MCF 10A (cell line): ENCODE measurements at regions of chr3 and their contacts with region 1.

Region 1: DNA sequence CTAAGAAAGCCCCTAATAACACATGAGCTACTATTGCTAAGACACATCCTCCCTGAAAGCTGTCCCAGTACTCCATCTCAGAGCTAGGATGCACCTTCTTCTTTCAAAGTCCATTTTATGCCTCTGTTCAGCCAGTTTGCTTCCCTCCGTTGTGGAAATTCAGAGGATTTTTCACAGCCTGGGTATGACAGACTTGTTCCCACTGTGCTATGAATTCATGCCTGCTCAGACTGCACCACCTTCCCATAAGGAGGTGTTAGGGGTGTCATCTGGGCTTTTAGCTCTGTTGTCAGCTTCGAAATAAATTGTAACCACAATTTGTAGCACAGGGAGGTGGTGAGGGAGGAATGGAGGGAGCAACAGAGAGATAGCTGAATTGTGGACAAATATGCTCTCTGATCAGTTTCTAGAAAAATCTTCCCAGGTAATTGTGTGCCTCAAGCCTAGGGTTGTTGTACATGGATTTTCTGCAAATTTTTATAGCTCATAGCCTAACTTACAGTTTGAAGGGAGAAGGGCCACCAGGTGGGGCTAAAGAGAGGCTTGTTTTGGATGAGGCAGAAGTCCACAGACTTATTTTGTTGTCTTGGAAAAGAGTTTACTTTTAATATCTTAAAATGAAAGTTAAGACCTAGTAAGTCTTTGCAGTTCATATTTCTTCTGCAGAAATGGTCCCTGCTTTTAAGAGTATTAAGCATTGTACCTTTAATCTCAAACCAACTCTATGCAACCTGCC is 462.0 kb downstream of the PDCD6IP start:
- DNase-seq: peak; percentile 61
- H3K4me3 Mint-ChIP-seq: no peak overlapping the region
- H3K27ac Mint-ChIP-seq: no peak overlapping the region
- H3K4me1 Mint-ChIP-seq: peaks cover 6% of the 10 kb centered on the region
- H3K27me3 Mint-ChIP-seq: peaks cover 29% of the 10 kb centered on the region
- CTCF ChIP-seq: peak; percentile 45

Region 2: DNA sequence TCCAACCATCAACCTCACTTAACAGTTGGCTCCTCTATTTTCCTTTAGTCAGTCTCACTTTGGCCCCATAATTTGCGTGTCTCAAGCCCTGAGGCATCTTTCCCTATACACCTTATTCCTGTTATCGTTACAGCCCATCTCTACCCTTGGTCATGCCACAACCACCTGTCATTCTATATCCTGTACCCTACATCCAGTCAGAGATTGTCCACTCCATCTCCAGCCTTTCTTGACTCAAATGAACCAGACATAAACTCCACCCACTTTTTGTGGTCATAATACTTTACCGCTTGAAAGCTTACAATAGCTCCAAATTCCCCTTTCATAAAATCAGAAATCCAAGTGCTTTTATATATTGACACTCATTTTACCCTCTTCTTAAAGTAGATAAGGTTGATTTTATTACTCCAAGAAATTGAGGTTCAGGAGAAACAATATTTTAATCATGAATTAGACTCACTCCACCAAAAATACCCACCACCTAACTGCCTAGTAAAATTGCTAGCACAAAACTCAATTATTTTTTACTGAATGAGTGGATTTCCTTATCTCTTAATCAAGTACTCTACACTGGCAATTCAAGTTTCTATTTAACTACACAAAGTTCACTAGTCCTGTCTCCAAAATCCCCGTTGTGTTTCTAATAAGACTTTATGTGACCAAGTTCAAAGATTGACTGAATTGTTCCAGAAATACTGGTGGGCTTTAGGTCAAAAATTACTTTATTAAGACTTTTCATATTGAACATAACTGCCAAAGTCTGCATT is 1299.9 kb before region 1 on chr3:
- CTCF ChIA-PET with region 1: no interaction called
- POLR2A ChIA-PET with region 1: no interaction called
- intact Hi-C with region 1: no loop called
- DNase-seq: no peak
- H3K4me3 Mint-ChIP-seq: no peak overlapping the region
- H3K27ac Mint-ChIP-seq: no peak overlapping the region
- H3K4me1 Mint-ChIP-seq: peaks cover 11% of the 10 kb centered on the region
- H3K27me3 Mint-ChIP-seq: no peaks in the 10 kb centered on the region
- CTCF ChIP-seq: no peak

Region 3: GRCh38 chr3:33807190-33807589 is 453.2 kb before region 1 on chr3:
- CTCF ChIA-PET with region 1: no interaction called
- POLR2A ChIA-PET with region 1: no interaction called
- intact Hi-C with region 1: no loop called
- DNase-seq: no peak
- H3K4me3 Mint-ChIP-seq: no peak overlapping the region
- H3K27ac Mint-ChIP-seq: no peak overlapping the region
- H3K4me1 Mint-ChIP-seq: peaks cover 59% of the 10 kb centered on the region
- H3K27me3 Mint-ChIP-seq: no peaks in the 10 kb centered on the region
- CTCF ChIP-seq: no peak

Region 4: DNA sequence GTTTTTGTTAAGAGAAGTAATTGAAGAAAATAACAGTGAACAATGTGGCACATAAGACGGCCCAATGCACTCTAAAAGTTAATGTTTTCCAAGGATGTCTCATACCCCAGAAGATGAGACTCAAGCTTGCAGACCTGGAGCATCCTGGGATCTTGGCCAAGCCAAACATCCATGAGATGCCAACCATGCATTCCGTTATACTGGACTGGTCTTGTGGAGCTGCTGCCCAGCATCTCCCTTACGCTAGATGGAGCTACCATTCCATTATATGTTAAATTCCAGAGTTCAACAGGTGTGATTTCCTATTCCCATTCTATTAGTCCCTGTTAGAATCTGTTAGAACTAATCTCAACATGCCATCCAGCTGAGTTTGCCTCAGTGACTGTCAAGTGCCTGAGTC is 280.2 kb before region 1 on chr3:
- CTCF ChIA-PET with region 1: interaction called, 10 read pairs
- POLR2A ChIA-PET with region 1: no interaction called
- intact Hi-C with region 1: loop called (anchors 1 kb)
- DNase-seq: peak; percentile 82
- H3K4me3 Mint-ChIP-seq: no peak overlapping the region
- H3K27ac Mint-ChIP-seq: no peak overlapping the region
- H3K4me1 Mint-ChIP-seq: no peaks in the 10 kb centered on the region
- H3K27me3 Mint-ChIP-seq: peaks cover 40% of the 10 kb centered on the region
- CTCF ChIP-seq: peak; percentile 60

Region 5: DNA sequence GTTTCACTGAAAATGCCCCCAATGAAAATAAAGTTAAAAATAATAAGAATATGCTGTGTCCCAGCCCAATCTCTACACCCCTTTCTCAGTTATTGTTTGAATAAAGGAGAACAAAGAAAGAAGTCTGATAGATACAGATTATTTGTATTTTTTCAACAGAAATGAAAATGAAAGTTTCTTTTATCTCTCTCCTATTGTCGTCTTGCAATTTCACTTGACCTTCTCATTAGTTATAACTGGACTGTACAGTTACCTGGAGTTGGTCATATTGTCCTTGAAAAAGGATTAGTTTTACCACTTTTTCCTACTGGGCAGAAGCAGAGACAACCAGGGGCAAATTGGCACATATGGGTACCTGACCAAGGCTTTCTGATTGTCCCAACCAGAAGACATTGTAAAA is 22.0 kb before region 1 on chr3:
- CTCF ChIA-PET with region 1: interaction called, 10 read pairs
- POLR2A ChIA-PET with region 1: no interaction called
- intact Hi-C with region 1: no loop called
- DNase-seq: no peak
- H3K4me3 Mint-ChIP-seq: no peak overlapping the region
- H3K27ac Mint-ChIP-seq: no peak overlapping the region
- H3K4me1 Mint-ChIP-seq: no peaks in the 10 kb centered on the region
- H3K27me3 Mint-ChIP-seq: peaks cover 40% of the 10 kb centered on the region
- CTCF ChIP-seq: no peak

Region 6: GRCh38 chr3:34292605-34293300 is 32.3 kb after region 1 on chr3:
- CTCF ChIA-PET with region 1: interaction called, 12 read pairs
- POLR2A ChIA-PET with region 1: no interaction called
- intact Hi-C with region 1: no loop called
- DNase-seq: no peak
- H3K4me3 Mint-ChIP-seq: no peak overlapping the region
- H3K27ac Mint-ChIP-seq: no peak overlapping the region
- H3K4me1 Mint-ChIP-seq: no peaks in the 10 kb centered on the region
- H3K27me3 Mint-ChIP-seq: peaks cover 15% of the 10 kb centered on the region
- CTCF ChIP-seq: no peak

Region 7: DNA sequence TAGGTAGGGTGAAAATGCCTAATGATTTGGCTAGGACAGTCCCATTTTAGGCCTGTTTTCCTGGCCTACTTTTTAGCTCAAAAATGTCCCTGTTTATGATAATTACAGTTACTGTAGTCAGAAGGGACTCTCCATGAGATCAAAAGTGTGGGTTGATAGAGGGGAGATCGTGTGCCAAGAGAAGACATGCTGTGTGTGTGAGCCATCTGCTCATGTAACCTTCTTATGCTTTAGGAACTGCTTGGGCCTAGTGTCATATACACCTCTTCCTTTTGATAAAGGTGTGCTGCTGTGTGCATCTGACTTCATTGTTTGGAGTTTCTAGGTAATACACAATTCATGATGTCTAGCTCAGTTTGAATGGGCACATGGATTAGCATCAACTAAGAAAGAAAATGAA is 324.5 kb after region 1 on chr3:
- CTCF ChIA-PET with region 1: no interaction called
- POLR2A ChIA-PET with region 1: no interaction called
- intact Hi-C with region 1: no loop called
- DNase-seq: no peak
- H3K4me3 Mint-ChIP-seq: no peak overlapping the region
- H3K27ac Mint-ChIP-seq: no peak overlapping the region
- H3K4me1 Mint-ChIP-seq: no peaks in the 10 kb centered on the region
- H3K27me3 Mint-ChIP-seq: peaks cover 16% of the 10 kb centered on the region
- CTCF ChIP-seq: no peak

Region 8: DNA sequence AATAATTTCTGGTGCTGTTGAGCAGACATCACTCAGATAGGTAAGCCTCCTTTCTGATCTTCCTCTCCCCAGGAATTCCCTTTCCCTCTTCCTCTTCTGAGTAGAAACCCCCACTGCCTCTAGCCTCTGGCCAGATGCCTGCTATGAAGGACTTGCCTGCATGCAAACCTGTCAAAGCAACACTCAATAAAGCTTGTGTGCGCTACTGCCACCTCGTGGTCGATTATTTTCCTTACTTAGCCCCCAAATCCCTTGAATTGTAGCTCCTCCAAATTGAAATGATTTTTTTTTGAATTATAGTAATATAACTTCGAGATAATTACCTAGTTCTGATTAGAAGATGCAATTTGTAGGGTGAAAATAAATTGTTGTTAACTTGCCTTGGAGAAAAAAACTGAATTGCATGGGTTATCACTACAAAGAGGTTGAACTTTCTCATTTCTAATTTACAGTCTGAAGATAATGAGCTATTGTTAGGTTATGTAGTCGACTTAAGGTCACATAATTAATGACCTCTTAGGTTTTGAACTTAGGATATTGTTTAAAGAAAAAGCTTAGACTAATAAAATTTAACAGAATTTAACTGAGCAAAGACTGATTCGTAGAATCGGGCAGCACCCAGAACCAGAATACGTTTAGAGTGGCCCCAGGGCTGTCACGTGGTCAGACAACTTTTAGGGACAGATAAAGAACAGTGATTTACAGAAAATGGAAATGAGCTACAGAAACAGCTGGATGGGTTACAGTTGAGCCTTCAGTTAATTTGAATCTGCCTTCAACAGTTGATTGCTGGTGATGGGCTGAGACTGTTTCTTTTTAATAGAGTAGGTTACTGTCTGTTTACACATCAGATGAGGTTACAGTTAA is 1648.2 kb after region 1 on chr3:
- CTCF ChIA-PET with region 1: interaction called, 3 read pairs
- POLR2A ChIA-PET with region 1: no interaction called
- intact Hi-C with region 1: loop called (anchors 1 kb)
- DNase-seq: peak; percentile 79
- H3K4me3 Mint-ChIP-seq: no peak overlapping the region
- H3K27ac Mint-ChIP-seq: no peak overlapping the region
- H3K4me1 Mint-ChIP-seq: no peaks in the 10 kb centered on the region
- H3K27me3 Mint-ChIP-seq: peaks cover 32% of the 10 kb centered on the region
- CTCF ChIP-seq: peak; percentile 76